ENCODE measurements at regions of chr11 and their contacts with region 1.

Region 1: GRCh38 chr11:58691675-58692074 is 40.1 kb downstream of the GLYAT start:
- DNase-seq: no peak
- ATAC-seq: no peak

Region 2: DNA sequence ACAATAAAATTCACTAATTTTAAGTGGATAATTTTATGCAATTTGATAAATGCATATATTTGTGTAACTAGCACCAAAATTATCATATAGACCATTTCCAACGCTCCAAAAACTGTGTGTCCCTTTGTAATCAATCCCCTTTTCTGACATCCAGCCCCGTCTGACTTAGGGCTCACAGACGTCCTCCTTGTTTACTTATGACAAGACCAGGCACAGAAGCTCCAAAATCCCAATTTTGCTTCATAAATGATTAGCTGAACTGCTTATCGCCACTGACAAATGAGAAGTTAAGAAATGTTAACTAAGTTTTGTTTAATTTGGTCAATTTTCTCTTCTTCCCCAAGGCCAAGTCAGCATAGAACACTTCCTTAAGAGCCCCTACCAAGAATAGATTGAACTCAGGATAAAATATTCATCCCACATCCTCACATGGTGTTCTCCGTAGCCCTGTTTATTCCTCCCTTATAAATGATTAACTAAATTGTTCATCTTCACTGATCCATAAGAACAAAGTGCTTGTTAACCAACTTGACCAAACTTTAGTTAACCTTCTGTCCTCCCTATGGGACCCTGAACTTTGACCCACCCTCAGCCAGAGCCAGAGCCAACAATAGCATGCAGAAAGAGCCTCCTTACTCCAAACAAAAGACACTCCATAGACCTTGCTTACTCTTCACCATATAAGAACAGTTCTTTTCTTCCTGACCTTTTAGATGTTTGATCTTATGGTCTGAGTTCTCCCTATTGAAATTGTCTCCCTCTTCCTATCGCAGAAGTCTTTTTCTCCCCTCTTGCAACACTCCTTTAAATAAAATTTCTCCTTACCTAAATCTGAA is 70.8 kb after region 1 on chr11:
- intact Hi-C with region 1: loop called in 1 of 2 experiments (anchors 10 kb)
- DNase-seq: no peak
- ATAC-seq: no peak

Measured in left colon (tissue), 2 donors.